A549 (cell line): ENCODE measurements at regions of chr19 and their contacts with region 1.

Region 1: DNA sequence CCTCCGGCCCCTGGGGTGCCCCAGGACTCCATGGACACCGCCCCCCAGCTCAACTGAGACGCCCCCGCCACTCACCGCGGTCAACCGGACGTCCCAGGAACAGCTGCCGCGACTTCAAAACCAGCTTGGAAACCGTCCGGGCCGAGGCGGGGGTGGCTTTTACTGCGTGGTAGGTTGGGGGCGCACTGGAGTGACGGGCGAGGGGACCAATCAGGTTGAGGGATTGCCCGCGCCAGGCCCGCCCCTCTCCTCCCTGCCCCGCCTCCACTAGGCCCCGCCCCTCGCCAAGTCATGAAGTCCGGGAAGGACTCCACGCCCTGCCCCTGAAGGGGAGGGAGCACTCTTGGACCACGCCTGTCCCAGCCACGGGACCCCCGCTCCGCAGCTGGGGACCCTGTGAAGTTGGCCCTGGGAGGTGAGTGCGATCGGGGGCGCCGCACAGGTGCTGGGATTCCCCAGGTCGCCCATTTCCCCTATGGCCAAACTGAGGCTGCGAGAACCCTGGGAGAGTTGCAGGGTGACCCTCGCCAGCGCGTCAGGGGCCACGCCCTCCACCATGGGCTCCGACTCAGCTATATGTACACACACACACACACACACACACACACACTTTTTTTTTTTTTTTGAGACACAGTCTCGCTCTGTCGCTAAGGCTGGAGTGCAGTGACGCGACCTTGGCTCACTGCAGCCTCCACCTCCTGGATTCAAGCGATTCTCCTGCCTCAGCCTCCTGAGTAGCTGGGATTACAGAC is at the start of gene PLIN3:
- DNase-seq: peak; percentile 93 to 96
- ATAC-seq: peak; percentile 84 to 88
- H3K4me3 ChIP-seq: peak within 1 kb of the TSS; percentile 97
- H3K27ac ChIP-seq: peak within 1 kb of the TSS; percentile 90 to 94
- H3K4me1 ChIP-seq: peaks cover 37% of the 10 kb centered on the region
- CTCF ChIP-seq: no peak
- EP300 ChIP-seq: no peak
- POLR2A ChIP-seq: peak; percentile 25; the same call in 1 of the 2 replicates
- RAD21 ChIP-seq: no peak
- polyA plus RNA-seq, gene PLIN3: 28.4 and 30.1 TPM in 2 replicates

Region 2: DNA sequence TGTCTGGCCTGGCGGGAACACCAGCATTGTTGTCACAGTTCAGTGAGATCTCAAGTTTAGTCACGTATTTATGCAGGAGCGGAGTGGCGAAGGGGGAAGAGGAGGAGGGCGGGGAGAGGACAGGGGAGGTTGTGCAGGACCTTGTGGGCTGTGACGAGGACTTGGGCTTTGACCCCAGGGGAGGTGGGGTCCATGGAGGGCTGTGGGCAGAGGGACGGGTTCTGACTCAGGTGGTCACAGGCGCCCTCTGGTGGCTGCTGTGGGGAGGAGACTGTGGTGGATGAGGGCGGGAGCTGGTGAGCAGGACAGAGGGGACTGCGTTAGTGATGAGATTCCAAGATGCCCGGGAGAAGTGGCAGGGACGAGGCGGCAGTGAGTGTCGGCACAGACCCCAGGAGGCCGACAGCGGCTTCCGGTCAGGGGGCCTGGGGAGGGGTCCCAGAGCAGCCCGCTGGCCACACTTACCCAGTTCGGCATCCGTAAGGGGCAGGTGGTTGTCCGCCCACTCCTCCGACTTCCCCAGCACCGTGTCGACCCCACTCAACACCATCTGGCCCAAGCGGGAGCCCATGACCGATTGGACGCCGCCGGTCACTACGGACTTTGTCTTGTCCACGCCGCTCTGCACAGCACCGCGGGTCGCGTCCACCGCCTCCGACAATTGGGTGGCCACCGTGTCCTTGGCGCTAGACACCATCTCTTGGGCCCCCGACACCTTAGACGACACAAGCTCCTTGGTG is 16.0 kb before region 1 on chr19:
- CTCF ChIA-PET with region 1: interaction called, 67 read pairs
- POLR2A ChIA-PET with region 1: interaction called, 5 read pairs
- DNase-seq: peak; percentile 52 to 63
- ATAC-seq: peak; percentile 93 to 97
- H3K4me3 ChIP-seq: no peak overlapping the region
- H3K27ac ChIP-seq: no peak overlapping the region
- H3K4me1 ChIP-seq: no peaks in the 10 kb centered on the region
- CTCF ChIP-seq: peak; percentile 54
- EP300 ChIP-seq: no peak
- POLR2A ChIP-seq: no peak
- RAD21 ChIP-seq: peak; percentile 64 to 65